ENCODE measurements at regions of chr12 and their contacts with region 1.

Region 1: DNA sequence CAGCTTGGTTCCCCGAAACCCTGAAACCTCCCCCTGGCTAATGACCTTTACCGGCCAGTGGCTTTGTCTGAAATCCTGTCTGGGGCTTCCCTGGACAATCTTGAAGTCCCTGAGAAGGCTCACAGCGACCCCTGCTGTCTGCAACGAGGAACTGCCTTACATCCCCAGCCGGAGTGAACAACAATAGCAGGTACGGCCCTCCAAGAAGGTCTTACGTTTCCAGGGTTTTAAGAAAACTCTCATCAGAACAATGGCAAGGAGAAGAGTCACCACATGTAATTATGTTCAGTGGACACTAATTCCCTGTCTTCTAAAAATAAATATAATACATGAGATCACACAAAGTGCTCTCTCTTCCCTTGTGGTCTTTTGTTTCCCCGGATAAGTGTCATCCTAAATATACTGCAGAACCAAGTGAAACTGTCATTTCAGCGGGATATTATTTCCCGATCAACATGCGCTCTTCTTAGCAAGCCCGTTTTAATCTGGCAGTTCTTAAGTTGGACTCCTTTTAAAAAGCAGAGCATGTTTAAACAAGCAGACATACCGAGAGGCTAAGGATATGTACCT is 53.3 kb downstream of the RBM19 start:
- DNase-seq: peak; percentile 54
- H3K4me3 ChIP-seq: no peak overlapping the region
- H3K27ac ChIP-seq: no peak overlapping the region
- H3K4me1 ChIP-seq: peaks cover 6% of the 10 kb centered on the region
- H3K27me3 ChIP-seq: no peaks in the 10 kb centered on the region
- CTCF ChIP-seq: peak; percentile 96 to 98

Region 2: GRCh38 chr12:113299619-113300237 is 613.1 kb before region 1 on chr12:
- CTCF ChIA-PET with region 1: no interaction called
- dilution Hi-C with region 1: no loop called
- in situ Hi-C with region 1: loop called (anchors 25 kb)
- intact Hi-C with region 1: no loop called
- DNase-seq: peak; percentile 84
- H3K4me3 ChIP-seq: no peak overlapping the region
- H3K27ac ChIP-seq: peak overlapping the region; percentile 67
- H3K4me1 ChIP-seq: peaks cover 15% of the 10 kb centered on the region
- H3K27me3 ChIP-seq: no peaks in the 10 kb centered on the region
- CTCF ChIP-seq: no peak

Region 3: GRCh38 chr12:113439606-113440030 is 473.2 kb before region 1 on chr12:
- CTCF ChIA-PET with region 1: no interaction called
- dilution Hi-C with region 1: no loop called
- in situ Hi-C with region 1: no loop called
- intact Hi-C with region 1: loop called (anchors 1 kb)
- DNase-seq: no peak
- H3K4me3 ChIP-seq: no peak overlapping the region
- H3K27ac ChIP-seq: no peak overlapping the region
- H3K4me1 ChIP-seq: no peaks in the 10 kb centered on the region
- H3K27me3 ChIP-seq: no peaks in the 10 kb centered on the region
- CTCF ChIP-seq: peak; percentile 49 to 74

Region 4: GRCh38 chr12:113462117-113462774 is 450.6 kb before region 1 on chr12:
- CTCF ChIA-PET with region 1: no interaction called
- dilution Hi-C with region 1: no loop called
- in situ Hi-C with region 1: loop called (anchors 10 to 25 kb)
- intact Hi-C with region 1: loop called (anchors 1 kb)
- DNase-seq: peak; percentile 57
- H3K4me3 ChIP-seq: peak overlapping the region in 2 of 3 experiments; percentile 27 to 31
- H3K27ac ChIP-seq: no peak overlapping the region
- H3K4me1 ChIP-seq: peaks cover 11% of the 10 kb centered on the region
- H3K27me3 ChIP-seq: peaks cover 49% of the 10 kb centered on the region
- CTCF ChIP-seq: peak; percentile 71 to 92

Region 5: DNA sequence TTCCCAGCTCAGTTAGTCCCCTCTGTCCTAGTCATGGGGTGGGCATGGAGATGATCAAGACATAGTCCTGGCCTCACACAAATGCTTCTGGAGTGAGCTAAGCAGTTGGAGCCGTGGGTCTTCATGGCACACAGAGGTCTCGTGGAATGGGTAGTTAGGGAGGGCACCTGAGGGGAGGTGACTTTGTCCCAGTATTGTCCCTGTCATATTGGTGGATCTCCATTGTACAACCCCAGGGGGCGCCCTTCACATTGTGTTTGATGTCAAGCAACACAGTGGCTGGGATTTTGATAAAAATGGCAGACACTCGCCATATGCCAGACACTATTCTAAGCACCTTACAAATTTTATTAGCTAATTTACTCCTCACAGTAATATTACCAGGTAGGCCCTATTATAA is 265.8 kb before region 1 on chr12:
- CTCF ChIA-PET with region 1: no interaction called
- dilution Hi-C with region 1: no loop called
- in situ Hi-C with region 1: no loop called
- intact Hi-C with region 1: loop called (anchors 1 kb)
- DNase-seq: no peak
- H3K4me3 ChIP-seq: no peak overlapping the region
- H3K27ac ChIP-seq: no peak overlapping the region
- H3K4me1 ChIP-seq: no peaks in the 10 kb centered on the region
- H3K27me3 ChIP-seq: no peaks in the 10 kb centered on the region
- CTCF ChIP-seq: peak in 1 of 2 donors; percentile 13

Region 6: DNA sequence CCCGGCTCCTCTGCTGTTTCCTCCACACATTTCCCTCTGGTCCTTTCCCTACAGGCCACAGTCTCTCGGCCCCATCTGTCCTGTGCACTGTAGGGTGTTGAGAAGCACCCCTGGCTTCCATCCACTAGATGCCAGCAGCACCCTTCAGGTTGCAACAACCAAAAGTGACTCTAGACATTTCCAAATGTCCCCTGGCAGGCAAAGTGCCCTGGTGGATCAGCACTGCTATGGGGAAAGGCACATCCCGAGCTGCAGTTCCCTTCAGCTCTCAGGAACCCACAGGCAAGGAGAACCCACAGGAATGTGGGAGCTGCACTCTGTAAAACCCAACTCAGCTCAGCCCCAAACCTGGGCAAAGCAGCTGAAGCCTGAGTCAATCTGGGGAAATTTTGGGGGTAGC is 23.8 kb before region 1 on chr12:
- CTCF ChIA-PET with region 1: no interaction called
- dilution Hi-C with region 1: no loop called
- in situ Hi-C with region 1: no loop called
- intact Hi-C with region 1: loop called (anchors 1 kb)
- DNase-seq: peak; percentile 55
- H3K4me3 ChIP-seq: no peak overlapping the region
- H3K27ac ChIP-seq: no peak overlapping the region
- H3K4me1 ChIP-seq: peaks cover 14% of the 10 kb centered on the region
- H3K27me3 ChIP-seq: no peaks in the 10 kb centered on the region
- CTCF ChIP-seq: peak in 1 of 2 donors; percentile 56

Region 7: DNA sequence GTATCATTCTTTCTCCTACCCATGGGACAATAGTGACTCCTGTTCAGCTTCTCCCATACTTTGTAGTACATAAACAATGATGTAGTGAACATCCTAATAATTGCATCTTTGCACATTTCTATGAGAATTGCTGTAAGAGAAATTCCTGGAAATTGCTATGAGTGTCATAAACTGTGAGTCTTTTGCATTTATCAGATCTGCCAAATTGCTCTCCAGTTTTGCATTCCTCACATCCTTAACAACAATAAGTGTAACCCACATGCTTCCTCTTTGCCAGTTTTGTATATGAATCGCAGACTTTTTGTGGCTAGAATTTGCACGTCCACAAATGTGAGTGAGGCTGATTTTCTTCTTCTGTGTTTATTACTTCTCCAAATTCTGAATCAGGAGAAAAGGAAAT is 617.1 kb after region 1 on chr12:
- CTCF ChIA-PET with region 1: no interaction called
- dilution Hi-C with region 1: no loop called
- in situ Hi-C with region 1: no loop called
- intact Hi-C with region 1: no loop called
- DNase-seq: no peak
- H3K4me3 ChIP-seq: no peak overlapping the region
- H3K27ac ChIP-seq: no peak overlapping the region
- H3K4me1 ChIP-seq: no peaks in the 10 kb centered on the region
- H3K27me3 ChIP-seq: no peaks in the 10 kb centered on the region
- CTCF ChIP-seq: no peak